ENCODE measurements at regions of chr5 and their contacts with region 1.

Region 1: GRCh38 chr5:110001648-110002047 is 311.9 kb downstream of the MAN2A1 start:
- DNase-seq: no peak
- ATAC-seq: no peak
- H3K4me3 ChIP-seq: no peak overlapping the region
- H3K27ac ChIP-seq: peak overlapping the region; percentile 93
- H3K4me1 ChIP-seq: peaks cover 30% of the 10 kb centered on the region
- H3K27me3 ChIP-seq: no peaks in the 10 kb centered on the region
- CTCF ChIP-seq: no peak

Region 2: GRCh38 chr5:109479260-109479860 is 522.3 kb before region 1 on chr5:
- CTCF ChIA-PET with region 1: no interaction called
- POLR2A ChIA-PET with region 1: no interaction called
- intact Hi-C with region 1: no loop called
- DNase-seq: peak; percentile 26
- ATAC-seq: no peak
- H3K4me3 ChIP-seq: no peak overlapping the region
- H3K27ac ChIP-seq: no peak overlapping the region
- H3K4me1 ChIP-seq: no peaks in the 10 kb centered on the region
- H3K27me3 ChIP-seq: no peaks in the 10 kb centered on the region
- CTCF ChIP-seq: peak; percentile 54

Region 3: GRCh38 chr5:109830955-109831502 is 170.6 kb before region 1 on chr5:
- CTCF ChIA-PET with region 1: no interaction called
- POLR2A ChIA-PET with region 1: no interaction called
- intact Hi-C with region 1: loop called (anchors 2 kb)
- DNase-seq: peak; percentile 87
- ATAC-seq: peak; percentile 95
- H3K4me3 ChIP-seq: no peak overlapping the region
- H3K27ac ChIP-seq: peak overlapping the region; percentile 75
- H3K4me1 ChIP-seq: peaks cover 33% of the 10 kb centered on the region
- H3K27me3 ChIP-seq: no peaks in the 10 kb centered on the region
- CTCF ChIP-seq: no peak

Region 4: GRCh38 chr5:109865637-109866036 is 136.0 kb before region 1 on chr5:
- CTCF ChIA-PET with region 1: interaction called, 4 read pairs
- POLR2A ChIA-PET with region 1: no interaction called
- intact Hi-C with region 1: loop called (anchors 5 kb)
- DNase-seq: peak; percentile 96
- ATAC-seq: peak; percentile 80
- H3K4me3 ChIP-seq: peak overlapping the region; percentile 14; the same call in 1 of the 2 replicates
- H3K27ac ChIP-seq: peak overlapping the region; percentile 96
- H3K4me1 ChIP-seq: peaks cover 75% of the 10 kb centered on the region
- H3K27me3 ChIP-seq: no peaks in the 10 kb centered on the region
- CTCF ChIP-seq: no peak

Region 5: GRCh38 chr5:109900911-109901627 is 100.6 kb before region 1 on chr5:
- CTCF ChIA-PET with region 1: no interaction called
- POLR2A ChIA-PET with region 1: no interaction called
- intact Hi-C with region 1: loop called (anchors 2 kb)
- DNase-seq: peak; percentile 98
- ATAC-seq: peak; percentile 86
- H3K4me3 ChIP-seq: peak overlapping the region; percentile 39; the same call in 1 of the 2 replicates
- H3K27ac ChIP-seq: peak overlapping the region; percentile 94
- H3K4me1 ChIP-seq: peaks cover 43% of the 10 kb centered on the region
- H3K27me3 ChIP-seq: no peaks in the 10 kb centered on the region
- CTCF ChIP-seq: peak; percentile 39; the same call in 1 of the 2 replicates

Region 6: GRCh38 chr5:109907731-109908130 is 93.9 kb before region 1 on chr5:
- CTCF ChIA-PET with region 1: no interaction called
- POLR2A ChIA-PET with region 1: no interaction called
- intact Hi-C with region 1: loop called (anchors 2 kb)
- DNase-seq: peak; percentile 39
- ATAC-seq: peak; percentile 47
- H3K4me3 ChIP-seq: no peak overlapping the region
- H3K27ac ChIP-seq: no peak overlapping the region
- H3K4me1 ChIP-seq: peaks cover 17% of the 10 kb centered on the region
- H3K27me3 ChIP-seq: no peaks in the 10 kb centered on the region
- CTCF ChIP-seq: no peak

Region 7: DNA sequence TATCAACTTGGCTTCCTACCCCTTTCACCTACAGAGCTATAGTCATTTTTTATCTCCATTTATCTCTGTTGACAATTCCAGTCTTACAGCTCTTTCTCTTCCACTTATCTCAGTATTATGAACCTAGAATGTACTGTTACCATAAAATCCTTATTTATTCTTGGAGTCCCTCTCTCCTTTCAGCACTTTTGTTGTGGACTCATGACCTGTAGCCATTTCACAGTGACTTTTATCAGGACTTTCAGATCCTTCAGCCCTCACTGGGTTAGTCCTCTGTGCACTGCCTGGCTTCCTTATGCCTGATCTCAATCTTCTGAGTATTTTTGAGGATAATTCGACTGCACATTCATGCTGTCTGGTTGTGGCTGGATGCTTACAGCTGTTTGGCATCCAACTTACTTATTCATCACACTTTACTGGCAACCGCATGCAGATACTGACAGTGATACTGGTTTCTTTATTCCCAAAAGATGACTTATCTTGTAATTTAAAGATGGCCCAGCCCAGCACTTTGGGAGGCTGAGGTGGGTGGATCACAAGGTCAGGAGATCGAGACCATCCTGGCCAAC is 18.6 kb before region 1 on chr5:
- CTCF ChIA-PET with region 1: no interaction called
- POLR2A ChIA-PET with region 1: no interaction called
- intact Hi-C with region 1: loop called (anchors 2 kb)
- DNase-seq: no peak
- ATAC-seq: no peak
- H3K4me3 ChIP-seq: no peak overlapping the region
- H3K27ac ChIP-seq: no peak overlapping the region
- H3K4me1 ChIP-seq: peaks cover 20% of the 10 kb centered on the region
- H3K27me3 ChIP-seq: no peaks in the 10 kb centered on the region
- CTCF ChIP-seq: no peak

Measured in PC-3 (cell line).